ENCODE measurements at regions of chr10 and their contacts with region 1.

Region 1: DNA sequence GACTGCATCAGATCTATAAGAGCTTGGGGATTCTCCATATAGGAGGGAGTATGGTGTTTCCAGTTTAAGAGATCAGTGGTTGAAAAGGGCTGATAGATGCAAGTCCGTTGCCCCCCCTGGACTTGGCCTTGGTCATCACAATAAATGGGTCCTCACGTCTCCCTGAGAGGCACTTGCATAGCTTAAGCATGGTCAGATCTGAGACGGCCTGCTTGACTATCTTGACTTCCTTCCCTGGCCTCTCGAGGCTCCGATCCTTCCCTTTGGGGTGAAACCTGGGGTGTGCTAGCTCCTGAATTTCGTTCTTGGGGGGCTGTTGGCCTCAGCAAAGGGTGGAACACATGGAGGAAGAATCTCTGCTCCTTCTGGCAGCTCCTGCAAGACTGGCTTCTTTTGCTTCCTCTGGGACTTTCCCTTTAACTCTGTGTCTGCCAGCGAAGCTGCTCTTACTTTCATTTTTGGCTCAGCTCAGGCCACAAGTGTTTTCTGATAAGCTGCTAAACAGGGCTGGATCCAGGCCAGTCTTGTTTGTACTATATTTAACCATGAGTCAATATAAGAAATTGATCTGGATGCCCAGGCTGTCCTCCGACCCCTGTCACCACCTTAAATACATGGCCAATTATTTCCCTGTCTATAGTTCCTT is 11.2 kb upstream of the ZNF485 start:
- DNase-seq: peak; percentile 29
- H3K4me3 Mint-ChIP-seq: peak overlapping the region; percentile 59
- H3K27ac Mint-ChIP-seq: peak overlapping the region; percentile 70
- H3K4me1 Mint-ChIP-seq: peaks cover 26% of the 10 kb centered on the region
- H3K27me3 Mint-ChIP-seq: peaks cover 14% of the 10 kb centered on the region

Region 2: DNA sequence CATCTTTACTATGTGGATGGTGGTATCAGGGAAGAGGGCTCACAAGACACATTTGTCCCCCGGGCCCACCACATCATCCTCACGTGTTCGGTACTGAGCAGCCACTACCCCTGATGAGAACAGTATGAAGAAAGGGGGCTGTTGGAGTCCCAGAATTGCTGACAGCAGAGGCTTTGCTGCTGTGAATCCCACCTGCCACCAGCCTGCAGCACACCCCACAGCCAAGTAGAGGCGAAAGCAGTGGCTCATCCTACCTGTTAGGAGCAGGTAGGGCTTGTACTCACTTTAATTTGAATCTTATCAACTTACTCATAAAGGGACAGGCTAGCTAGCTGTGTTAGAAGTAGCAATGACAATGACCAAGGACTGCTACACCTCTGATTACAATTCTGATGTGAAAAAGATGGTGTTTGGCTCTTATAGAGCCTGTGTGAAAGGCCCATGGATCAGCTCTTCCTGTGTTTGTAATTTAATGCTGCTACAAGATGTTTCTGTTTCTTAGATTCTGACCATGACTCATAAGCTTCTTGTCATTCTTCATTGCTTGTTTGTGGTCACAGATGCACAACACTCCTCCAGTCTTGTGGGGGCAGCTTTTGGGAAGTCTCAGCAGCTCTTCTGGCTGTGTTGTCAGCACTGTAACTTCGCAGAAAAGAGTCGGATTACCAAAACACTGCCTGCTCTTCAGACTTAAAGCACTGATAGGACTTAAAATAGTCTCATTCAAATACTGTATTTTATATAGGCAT is 465.9 kb before region 1 on chr10:
- intact Hi-C with region 1: loop called (anchors 10 kb)
- DNase-seq: peak; percentile 32
- H3K4me3 Mint-ChIP-seq: no peak overlapping the region
- H3K27ac Mint-ChIP-seq: peak overlapping the region; percentile 86
- H3K4me1 Mint-ChIP-seq: peaks cover 46% of the 10 kb centered on the region
- H3K27me3 Mint-ChIP-seq: no peaks in the 10 kb centered on the region

Region 3: DNA sequence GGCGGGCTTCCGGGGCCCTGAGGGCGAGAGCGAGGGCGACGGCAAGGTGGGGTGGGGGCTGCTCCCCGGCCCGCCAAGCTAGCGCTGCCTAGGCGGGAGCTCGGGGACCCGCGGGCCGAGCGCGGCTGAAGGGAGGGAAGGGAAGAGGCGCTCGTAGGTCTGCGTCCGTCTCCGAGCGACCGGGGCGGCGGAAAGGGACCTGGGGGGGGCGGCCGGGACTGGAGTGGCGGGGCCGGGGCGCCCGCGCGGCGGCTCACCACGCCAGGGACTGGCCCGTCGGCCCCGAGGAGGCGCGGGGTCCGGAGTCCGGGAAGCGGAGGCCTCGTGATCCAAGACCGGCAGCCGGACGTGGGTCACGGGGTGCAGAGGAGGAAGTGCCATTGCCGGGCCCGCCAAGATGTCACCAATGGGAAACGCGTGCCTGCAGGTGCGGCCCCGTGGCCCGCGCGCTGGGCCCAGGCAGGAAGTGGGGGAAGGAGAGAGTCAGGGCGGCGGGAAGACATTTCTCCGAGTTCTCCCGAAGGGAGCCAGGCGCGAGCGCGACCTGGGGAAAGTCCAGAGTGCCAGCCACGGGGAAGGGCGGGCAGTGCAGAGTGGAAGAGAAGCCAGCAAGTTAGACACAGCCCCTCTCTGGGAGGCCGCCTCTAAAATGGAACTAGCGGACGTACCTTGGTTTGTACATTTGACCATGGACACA is 198.0 kb before region 1 on chr10:
- intact Hi-C with region 1: loop called (anchors 5 kb)
- DNase-seq: peak; percentile 84
- H3K4me3 Mint-ChIP-seq: peak overlapping the region; percentile 86
- H3K27ac Mint-ChIP-seq: peak overlapping the region; percentile 93
- H3K4me1 Mint-ChIP-seq: peaks cover 62% of the 10 kb centered on the region
- H3K27me3 Mint-ChIP-seq: no peaks in the 10 kb centered on the region

Region 4: GRCh38 chr10:43606322-43607198 is 11.5 kb after region 1 on chr10 and contains the start of gene ZNF485:
- intact Hi-C with region 1: loop called (anchors 1 kb)
- DNase-seq: peak; percentile 41
- H3K4me3 Mint-ChIP-seq: peak within 1 kb of the TSS; percentile 83
- H3K27ac Mint-ChIP-seq: peak within 1 kb of the TSS; percentile 67
- H3K4me1 Mint-ChIP-seq: peaks cover 14% of the 10 kb centered on the region
- H3K27me3 Mint-ChIP-seq: peaks cover 4% of the 10 kb centered on the region
- total RNA-seq, gene ZNF485: 5.6 and 6.5 TPM in 2 replicates

Region 5: DNA sequence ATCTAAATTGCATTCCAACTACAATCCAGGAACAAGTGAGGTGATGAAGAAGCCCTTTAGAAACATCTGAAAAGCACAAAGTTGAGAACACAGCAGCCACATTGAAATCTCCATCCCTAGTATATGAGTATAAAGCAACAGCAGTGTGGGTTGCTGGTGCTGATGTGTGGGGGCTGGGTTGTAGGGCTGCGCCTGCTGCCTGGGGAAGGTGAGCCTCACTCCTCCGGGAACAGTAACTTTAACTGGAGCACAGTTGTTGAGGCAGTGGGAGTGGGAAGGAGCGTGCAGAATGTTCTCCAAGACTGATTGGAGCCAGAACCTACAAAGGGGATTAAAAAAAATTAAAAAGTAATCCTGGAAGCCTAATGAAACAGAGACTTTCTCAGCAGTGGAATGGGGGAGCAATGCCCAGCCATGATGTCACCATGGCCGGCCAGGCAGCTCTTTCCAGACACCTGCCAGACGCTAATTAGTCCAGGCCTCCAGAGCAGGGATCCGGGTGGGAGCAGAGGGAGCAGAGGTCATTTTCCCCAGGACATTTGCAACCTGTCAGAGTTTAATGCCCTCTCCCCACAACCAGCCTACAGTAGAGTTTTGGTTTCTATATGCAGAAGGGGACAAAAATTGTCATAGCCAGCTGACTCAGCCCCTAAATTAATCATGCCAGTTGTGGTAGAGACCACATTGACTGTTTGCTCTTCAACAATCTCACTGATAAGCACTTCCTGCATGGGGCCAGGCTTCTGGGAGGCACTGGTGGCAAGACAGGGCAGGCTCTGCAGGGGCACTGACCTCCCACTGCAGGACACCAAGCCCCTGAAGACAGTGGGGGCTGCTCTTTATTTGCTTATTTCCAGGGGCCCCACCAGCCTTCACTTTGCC is 186.7 kb after region 1 on chr10:
- intact Hi-C with region 1: loop called (anchors 10 kb)
- DNase-seq: peak; percentile 26
- H3K4me3 Mint-ChIP-seq: no peak overlapping the region
- H3K27ac Mint-ChIP-seq: peak overlapping the region; percentile 78
- H3K4me1 Mint-ChIP-seq: peaks cover 42% of the 10 kb centered on the region
- H3K27me3 Mint-ChIP-seq: no peaks in the 10 kb centered on the region

Measured in activated T-helper 2 cell treated with anti-CD3 and anti-CD28 coated beads, Interferon-gamma antibody, Interleukin-2, Interleukin-4, amounts not matched to agents 10 μg/mL and 5 μg/mL and 100 μg/mL, durations not matched to agents 14 hours and 24 hours and 36 hours (primary cell).